ENCODE measurements at regions of chr14 and their contacts with region 1.

Region 1: GRCh38 chr14:104976198-104977007 is 1.8 kb downstream of the AHNAK2 start:
- DNase-seq: peak; percentile 91 to 93
- H3K4me3 ChIP-seq: peak overlapping the region in 1 of 4 donors; percentile 52
- H3K27ac ChIP-seq: peak overlapping the region in 2 of 5 donors; percentile 90 to 94
- H3K4me1 ChIP-seq: peaks cover 68 to 93% (median 83%) of the 10 kb centered on the region in 4 donors
- H3K27me3 ChIP-seq: peaks cover 0 to 31% (median 21%) of the 10 kb centered on the region in 3 donors
- CTCF ChIP-seq: peak in 5 of 7 experiments; percentile 87 to 95 (median 92)
- EP300 ChIP-seq: no peak
- POLR2A ChIP-seq: no peak

Region 2: GRCh38 chr14:105020815-105021655 is 44.6 kb after region 1 on chr14 and contains the start of gene CDCA4:
- intact Hi-C with region 1: loop called (anchors 5 kb)
- DNase-seq: peak; percentile 99
- H3K4me3 ChIP-seq: peak within 1 kb of the TSS; percentile 89 to 95 (median 94)
- H3K27ac ChIP-seq: peak within 1 kb of the TSS; percentile 85 to 94 (median 87)
- H3K4me1 ChIP-seq: peaks cover 22 to 56% (median 37%) of the 10 kb centered on the region in 4 donors
- H3K27me3 ChIP-seq: no peaks in the 10 kb centered on the region
- CTCF ChIP-seq: no peak
- EP300 ChIP-seq: no peak
- POLR2A ChIP-seq: no peak
- total RNA-seq, gene CDCA4: 2.9 to 12.3 (median 4.5) TPM

Region 3: DNA sequence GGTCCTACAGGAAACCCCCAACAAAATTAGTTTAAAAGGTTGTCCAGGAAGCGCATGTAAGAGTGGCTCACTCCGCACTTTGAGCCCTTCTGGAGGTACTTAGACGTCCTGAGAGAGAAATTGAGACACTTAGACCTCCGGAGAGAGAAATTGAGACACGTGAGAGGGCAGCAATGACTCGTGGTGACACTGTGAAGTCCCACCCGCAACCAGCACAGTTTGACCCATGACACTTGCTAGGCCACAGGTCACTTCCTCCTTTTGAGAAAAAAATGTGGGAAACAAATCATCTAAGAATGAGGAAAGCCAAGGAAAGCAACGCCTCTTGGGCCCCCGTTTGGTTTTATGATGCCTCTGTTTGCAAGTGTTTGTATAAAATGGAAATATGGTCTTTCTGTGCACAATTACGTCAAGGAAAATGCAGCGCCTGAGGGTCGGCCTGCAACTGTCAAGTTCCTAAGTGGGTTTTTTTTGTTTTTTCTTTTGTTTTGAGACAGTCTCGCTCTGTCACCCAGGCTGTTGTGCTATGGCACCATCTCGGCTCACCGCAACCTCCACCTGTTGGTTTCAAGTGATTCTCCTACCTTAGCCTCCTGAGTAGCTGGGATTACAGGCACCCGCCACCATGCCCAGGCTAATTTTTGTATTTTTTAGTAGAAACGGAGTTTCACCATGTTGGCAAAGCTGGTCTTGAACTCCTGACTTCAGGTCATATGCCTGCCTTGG is 58.1 kb after region 1 on chr14:
- intact Hi-C with region 1: no loop called
- DNase-seq: no peak
- H3K4me3 ChIP-seq: no peak overlapping the region
- H3K27ac ChIP-seq: peak overlapping the region in 1 of 5 donors; percentile 70
- H3K4me1 ChIP-seq: peaks cover 0 to 13% (median 2%) of the 10 kb centered on the region in 4 donors
- H3K27me3 ChIP-seq: peaks cover 0 to 2% (median 0%) of the 10 kb centered on the region in 3 donors
- CTCF ChIP-seq: no peak
- EP300 ChIP-seq: no peak
- POLR2A ChIP-seq: no peak

Region 4: DNA sequence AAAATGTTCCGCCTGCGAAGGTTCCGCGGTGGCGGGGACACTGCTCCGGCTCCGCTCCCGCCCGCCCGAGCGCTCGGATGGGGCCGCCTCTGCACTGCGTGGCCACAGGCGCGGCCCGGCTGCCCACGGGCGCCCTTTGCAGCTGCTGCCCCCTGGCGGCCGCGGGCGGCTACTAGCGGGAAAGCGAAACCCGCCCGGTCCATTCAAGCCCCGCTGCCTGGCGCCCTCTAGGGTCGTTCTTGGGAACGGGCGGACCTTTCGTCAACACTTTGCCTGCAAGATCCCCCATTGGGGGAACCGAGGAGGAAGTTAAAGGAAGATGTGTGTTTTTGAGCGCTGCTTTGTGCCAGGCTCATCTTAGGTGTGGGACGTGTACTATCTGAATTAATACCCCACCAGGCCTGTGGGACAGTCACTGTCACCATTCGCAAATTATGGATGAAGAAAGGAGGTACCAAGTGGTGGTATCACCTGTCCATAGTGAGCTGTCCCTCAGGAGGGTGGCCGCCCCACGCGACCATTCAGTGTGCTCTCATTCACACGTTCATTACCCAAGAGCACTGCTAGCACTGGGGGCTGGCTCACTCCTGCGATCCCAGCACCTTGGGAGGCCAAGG is 69.4 kb after region 1 on chr14:
- intact Hi-C with region 1: loop called (anchors 5 kb)
- DNase-seq: peak; percentile 95 to 96
- H3K4me3 ChIP-seq: no peak overlapping the region
- H3K27ac ChIP-seq: no peak overlapping the region
- H3K4me1 ChIP-seq: peaks cover 0 to 17% (median 12%) of the 10 kb centered on the region in 4 donors
- H3K27me3 ChIP-seq: peaks cover 0 to 5% (median 0%) of the 10 kb centered on the region in 3 donors
- CTCF ChIP-seq: peak in 5 of 7 experiments; percentile 99 to 100 (median 100)
- EP300 ChIP-seq: no peak
- POLR2A ChIP-seq: no peak

Measured in stomach (tissue), 19 donors.